ENCODE measurements at regions of chr5 and their contacts with region 1.

Region 1: GRCh38 chr5:130198925-130199324 is 294.7 kb downstream of the CHSY3 start:
- DNase-seq: no peak
- H3K4me3 ChIP-seq: no peak overlapping the region
- H3K27ac ChIP-seq: no peak overlapping the region
- H3K4me1 ChIP-seq: no peaks in the 10 kb centered on the region
- H3K27me3 ChIP-seq: no peaks in the 10 kb centered on the region
- CTCF ChIP-seq: peak; percentile 22; the same call in 1 of the 2 replicates

Region 2: DNA sequence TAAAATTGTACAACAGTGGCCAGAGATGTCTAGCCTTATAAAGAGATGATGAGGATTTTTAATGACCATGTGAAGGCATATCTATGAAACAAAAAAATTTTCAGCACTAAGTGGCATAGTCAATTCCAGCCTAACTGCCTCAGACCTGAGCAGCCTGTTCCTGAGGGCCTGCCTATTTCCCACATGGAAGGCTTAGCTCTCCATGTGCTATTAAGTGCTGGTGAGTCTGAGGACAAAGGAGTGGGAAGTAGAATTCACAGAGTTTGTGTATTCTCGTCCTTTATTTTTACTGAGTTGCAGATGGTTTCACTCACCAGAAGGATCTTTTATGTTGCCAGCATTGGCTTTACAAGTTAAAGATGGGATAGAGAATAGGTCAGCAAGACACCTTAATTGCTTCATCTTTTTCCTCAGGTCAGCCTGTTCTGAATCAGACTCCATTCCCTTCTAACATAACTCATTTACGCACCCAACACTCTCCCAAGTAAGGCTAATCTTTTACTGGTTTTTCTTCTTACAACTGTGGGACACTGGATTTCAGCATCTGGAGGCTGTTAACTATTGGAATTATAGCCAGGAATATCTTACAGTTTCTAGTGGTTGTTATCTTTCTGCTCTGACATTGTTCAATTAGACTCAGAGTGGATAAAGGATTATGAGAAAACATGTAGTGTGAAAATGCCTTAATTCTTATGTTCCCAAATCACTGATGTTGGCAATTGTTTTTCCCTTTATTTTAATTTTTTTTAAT is 1027.6 kb before region 1 on chr5:
- CTCF ChIA-PET with region 1: no interaction called
- POLR2A ChIA-PET with region 1: no interaction called
- intact Hi-C with region 1: no loop called
- DNase-seq: no peak
- H3K4me3 ChIP-seq: no peak overlapping the region
- H3K27ac ChIP-seq: no peak overlapping the region
- H3K4me1 ChIP-seq: no peaks in the 10 kb centered on the region
- H3K27me3 ChIP-seq: no peaks in the 10 kb centered on the region
- CTCF ChIP-seq: no peak

Region 3: DNA sequence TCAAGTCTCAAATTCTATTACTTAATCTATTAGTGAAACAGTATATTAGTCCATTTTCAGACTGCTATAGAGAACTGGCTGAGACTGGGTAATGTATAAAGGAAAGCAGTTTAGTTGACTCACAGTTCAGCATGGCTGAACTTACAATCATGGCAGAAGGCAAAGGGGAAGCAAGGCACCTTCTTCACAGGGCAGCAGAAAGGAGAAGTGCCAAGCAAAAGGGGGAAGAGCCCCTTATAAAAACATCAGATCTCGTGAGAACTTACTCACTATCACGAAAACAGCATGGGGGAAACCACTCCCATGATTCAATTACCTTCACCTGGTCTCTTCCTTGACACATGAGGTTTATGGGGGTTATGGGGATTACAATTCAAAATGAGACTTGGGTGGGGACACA is 362.6 kb before region 1 on chr5:
- CTCF ChIA-PET with region 1: no interaction called
- POLR2A ChIA-PET with region 1: no interaction called
- intact Hi-C with region 1: no loop called
- DNase-seq: no peak
- H3K4me3 ChIP-seq: no peak overlapping the region
- H3K27ac ChIP-seq: no peak overlapping the region
- H3K4me1 ChIP-seq: no peaks in the 10 kb centered on the region
- H3K27me3 ChIP-seq: no peaks in the 10 kb centered on the region
- CTCF ChIP-seq: no peak

Region 4: GRCh38 chr5:130135506-130135905 is 63.4 kb before region 1 on chr5:
- CTCF ChIA-PET with region 1: no interaction called
- POLR2A ChIA-PET with region 1: no interaction called
- intact Hi-C with region 1: no loop called
- DNase-seq: no peak
- H3K4me3 ChIP-seq: no peak overlapping the region
- H3K27ac ChIP-seq: no peak overlapping the region
- H3K4me1 ChIP-seq: no peaks in the 10 kb centered on the region
- H3K27me3 ChIP-seq: no peaks in the 10 kb centered on the region
- CTCF ChIP-seq: no peak

Region 5: GRCh38 chr5:130400090-130400489 is 201.2 kb after region 1 on chr5:
- CTCF ChIA-PET with region 1: no interaction called
- POLR2A ChIA-PET with region 1: no interaction called
- intact Hi-C with region 1: loop called (anchors 10 kb)
- DNase-seq: no peak
- H3K4me3 ChIP-seq: no peak overlapping the region
- H3K27ac ChIP-seq: no peak overlapping the region
- H3K4me1 ChIP-seq: peaks cover 8% of the 10 kb centered on the region; the same call in 1 of the 2 replicates
- H3K27me3 ChIP-seq: no peaks in the 10 kb centered on the region
- CTCF ChIP-seq: no peak